ENCODE measurements at regions of chr5 and their contacts with region 1.

Region 1: GRCh38 chr5:1140171-1140817 is 28.4 kb upstream of the SLC12A7 start:
- H3K4me3 ChIP-seq: no peak overlapping the region
- H3K27ac ChIP-seq: no peak overlapping the region
- H3K4me1 ChIP-seq: no peaks in the 10 kb centered on the region
- CTCF ChIP-seq: peak; percentile 87

Region 2: GRCh38 chr5:885529-885928 is 254.8 kb before region 1 on chr5:
- CTCF ChIA-PET with region 1: no interaction called
- POLR2A ChIA-PET with region 1: no interaction called
- H3K4me3 ChIP-seq: no peak overlapping the region
- H3K27ac ChIP-seq: no peak overlapping the region
- H3K4me1 ChIP-seq: no peaks in the 10 kb centered on the region
- CTCF ChIP-seq: no peak

Region 3: GRCh38 chr5:989961-990530 is 150.2 kb before region 1 on chr5:
- CTCF ChIA-PET with region 1: interaction called, 10 read pairs
- POLR2A ChIA-PET with region 1: no interaction called
- H3K4me3 ChIP-seq: no peak overlapping the region
- H3K27ac ChIP-seq: no peak overlapping the region
- H3K4me1 ChIP-seq: no peaks in the 10 kb centered on the region
- CTCF ChIP-seq: no peak

Region 4: DNA sequence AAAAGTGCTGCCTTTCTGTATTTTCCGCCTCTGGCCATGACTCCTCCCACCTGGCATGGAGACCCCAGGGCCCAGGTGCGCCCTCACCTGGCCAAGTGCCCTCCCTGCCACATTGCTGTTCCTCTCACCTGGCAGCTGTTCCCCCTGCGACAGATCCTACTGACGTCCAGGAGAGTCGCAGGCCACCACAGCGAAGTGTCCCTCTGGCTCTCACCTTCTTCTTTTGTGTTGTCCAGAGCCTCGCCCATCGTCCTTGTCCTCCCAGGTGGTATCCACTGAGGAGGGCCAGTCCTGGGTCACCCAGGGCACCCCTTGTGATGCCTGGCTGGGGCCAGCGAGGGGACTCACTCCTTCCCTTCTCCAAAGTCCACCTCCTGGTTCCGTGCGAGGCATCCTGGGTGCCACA is 129.1 kb before region 1 on chr5:
- CTCF ChIA-PET with region 1: interaction called, 13 read pairs
- POLR2A ChIA-PET with region 1: no interaction called
- H3K4me3 ChIP-seq: no peak overlapping the region
- H3K27ac ChIP-seq: no peak overlapping the region
- H3K4me1 ChIP-seq: peaks cover 15% of the 10 kb centered on the region
- CTCF ChIP-seq: peak; percentile 62

Region 5: DNA sequence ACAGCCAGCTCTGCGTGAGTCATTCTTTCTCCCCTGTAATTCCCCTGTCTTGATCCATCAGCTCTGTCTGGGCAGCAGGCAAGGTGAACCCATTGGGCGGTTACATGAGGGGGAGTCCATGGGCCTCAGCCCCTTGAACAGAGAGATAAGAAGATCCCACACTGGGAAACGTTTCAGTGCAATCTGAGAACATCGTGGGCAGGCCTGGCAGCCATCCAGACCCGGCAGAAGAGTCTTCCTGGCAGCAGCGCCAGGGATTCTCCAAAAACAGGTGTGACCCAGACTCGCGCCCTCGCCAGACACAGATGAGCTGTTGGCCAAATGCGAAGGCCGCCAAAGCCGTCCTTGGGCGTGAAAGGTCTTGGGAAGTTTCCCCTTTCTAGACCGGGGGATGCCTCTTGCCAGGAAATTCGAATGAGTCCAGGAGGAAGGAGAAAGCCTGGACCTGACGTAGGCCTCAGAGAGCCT is 22.0 kb before region 1 on chr5:
- CTCF ChIA-PET with region 1: interaction called, 35 read pairs
- POLR2A ChIA-PET with region 1: interaction called, 5 read pairs
- H3K4me3 ChIP-seq: no peak overlapping the region
- H3K27ac ChIP-seq: peak overlapping the region; percentile 76
- H3K4me1 ChIP-seq: peaks cover 16% of the 10 kb centered on the region
- CTCF ChIP-seq: no peak

Region 6: DNA sequence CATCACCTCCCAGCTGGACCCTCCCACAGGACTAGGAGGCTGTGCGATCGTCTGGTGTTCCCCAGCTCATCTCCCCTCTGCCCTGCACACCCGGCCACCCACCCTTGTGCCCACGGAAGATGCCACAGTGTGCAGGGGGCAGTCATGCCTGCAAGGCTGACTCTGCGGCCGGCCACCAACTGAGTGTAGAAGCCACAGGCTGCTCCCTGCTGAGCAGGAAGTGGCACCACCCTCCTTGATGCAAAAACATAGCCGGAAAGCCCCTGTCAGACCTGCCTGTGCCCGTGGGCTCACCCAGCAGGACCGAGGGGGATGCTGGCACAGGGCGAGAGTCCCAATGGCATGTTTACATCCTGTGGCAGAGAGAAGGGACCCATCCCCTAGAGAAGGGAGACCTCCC is 11.9 kb after region 1 on chr5:
- CTCF ChIA-PET with region 1: interaction called, 13 read pairs
- POLR2A ChIA-PET with region 1: no interaction called
- H3K4me3 ChIP-seq: no peak overlapping the region
- H3K27ac ChIP-seq: no peak overlapping the region; the same call in 1 of the 2 replicates
- H3K4me1 ChIP-seq: peaks cover 5% of the 10 kb centered on the region; the same call in 1 of the 2 replicates
- CTCF ChIP-seq: no peak